AG04449 (cell line): ENCODE measurements at regions of chr17 and their contacts with region 1.

Region 1: DNA sequence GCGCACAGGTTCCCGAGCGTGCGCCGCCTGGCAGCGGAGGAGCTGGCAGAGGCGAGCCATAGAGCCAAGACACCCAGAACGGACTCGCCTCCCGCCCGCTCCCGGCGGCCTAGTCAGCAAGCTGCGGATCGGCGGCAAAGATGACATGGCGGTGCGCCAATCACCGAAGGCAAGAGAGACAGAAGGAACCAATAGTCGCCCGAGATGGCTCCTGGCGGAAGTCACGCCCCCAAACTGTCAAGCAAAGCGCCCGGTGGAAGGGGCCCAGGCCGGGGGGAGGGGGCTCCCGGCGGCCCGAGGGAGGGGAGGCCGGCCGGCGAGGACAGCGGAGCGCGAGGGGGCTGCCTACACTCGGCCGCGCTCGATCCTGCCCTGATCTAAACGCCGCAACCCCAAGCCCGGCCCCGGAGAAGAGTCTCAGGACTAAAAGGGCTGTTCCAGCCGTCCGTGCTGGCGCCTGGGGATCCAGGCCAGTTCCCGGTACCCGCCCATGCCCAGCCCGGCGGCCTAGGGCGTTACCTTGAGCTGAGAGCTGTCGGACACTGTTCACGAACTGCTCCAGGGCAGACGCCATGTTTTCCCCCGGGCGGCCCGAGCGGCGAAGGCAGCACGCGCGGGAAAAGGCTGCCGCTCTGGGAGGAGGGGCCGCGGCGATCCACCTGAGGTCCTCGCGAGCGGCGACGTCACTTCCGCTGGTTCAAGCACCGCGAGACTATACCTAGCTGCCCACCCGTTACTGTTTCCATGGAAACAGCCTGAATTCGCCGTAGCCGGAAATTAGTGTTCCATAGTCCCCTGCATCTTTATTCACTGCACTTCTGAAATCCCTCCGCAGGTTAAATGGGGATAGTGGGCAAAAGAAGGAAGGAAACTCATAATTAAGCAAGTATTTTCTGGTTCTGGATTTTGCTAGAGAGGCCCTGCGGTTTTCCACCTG is at the start of gene COPS3:
- DNase-seq: peak; percentile 80
- H3K4me3 ChIP-seq: peak within 1 kb of the TSS; percentile 85
- CTCF ChIP-seq: no peak

Region 2: DNA sequence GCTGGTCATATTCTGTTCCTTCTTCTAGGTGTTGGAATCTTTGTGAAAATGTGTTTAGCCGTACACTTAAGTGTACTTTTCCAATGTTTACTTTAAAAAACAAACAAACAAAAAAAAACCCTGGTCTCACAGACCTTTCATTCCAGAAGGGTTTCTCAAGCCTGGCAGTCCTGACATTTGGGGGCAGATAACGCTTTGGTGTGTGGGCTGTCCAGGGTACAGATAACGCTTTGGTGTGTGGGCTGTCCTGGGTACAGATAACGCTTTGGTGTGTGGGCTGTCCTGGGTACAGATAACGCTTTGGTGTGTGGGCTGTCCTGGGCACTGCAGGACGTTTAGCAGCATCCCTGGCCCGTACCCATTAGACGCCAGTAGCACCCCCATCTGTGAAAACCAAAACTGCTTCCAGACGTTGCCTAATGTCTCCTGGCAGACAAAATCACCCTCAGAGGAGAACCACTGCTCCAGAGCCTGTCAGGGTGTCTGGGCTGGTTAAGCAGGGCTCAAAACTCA is 28.7 kb before region 1 on chr17:
- CTCF ChIA-PET with region 1: no interaction called
- POLR2A ChIA-PET with region 1: no interaction called
- DNase-seq: no peak
- H3K4me3 ChIP-seq: no peak overlapping the region
- CTCF ChIP-seq: no peak

Region 3: DNA sequence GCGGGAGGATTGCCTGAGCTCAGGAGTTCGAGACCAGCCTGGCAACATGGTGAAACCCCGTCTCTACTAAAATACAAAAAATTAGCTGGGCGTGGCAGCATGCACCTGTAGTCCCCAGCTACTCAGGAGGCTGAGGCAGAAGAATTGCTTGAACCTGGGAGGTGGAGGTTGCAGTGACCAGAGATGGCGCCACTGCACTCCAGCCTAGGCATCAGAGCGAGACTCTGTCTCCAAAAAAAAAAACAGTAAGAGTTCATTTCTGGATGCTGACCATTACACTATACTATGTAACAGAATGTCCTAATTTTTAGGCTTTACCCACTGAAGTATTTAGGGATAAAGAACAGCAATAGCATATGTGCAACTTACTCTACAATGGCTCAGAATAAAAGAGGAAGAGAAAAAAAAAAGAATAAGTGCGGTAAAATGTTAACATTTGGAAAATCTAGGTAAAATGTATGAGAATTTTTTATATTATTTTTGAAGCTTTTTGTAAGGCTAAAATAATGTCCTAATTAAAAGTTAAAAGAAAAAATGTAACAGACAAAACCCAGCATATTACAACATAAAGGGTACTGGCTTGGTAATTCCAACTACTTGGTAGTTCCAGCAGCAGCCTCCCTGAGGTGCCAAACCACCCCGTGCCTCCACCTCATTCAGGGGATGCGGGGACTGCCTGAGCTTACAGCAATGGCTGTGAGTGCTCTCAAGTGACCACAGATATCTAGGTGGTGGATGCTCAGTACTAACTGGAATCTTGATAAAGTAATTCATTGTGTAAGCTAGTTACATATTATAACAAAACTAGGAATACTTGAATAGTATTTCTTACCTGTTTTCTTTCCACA is 10.7 kb before region 1 on chr17:
- CTCF ChIA-PET with region 1: interaction called, 10 read pairs
- POLR2A ChIA-PET with region 1: no interaction called
- DNase-seq: no peak
- H3K4me3 ChIP-seq: no peak overlapping the region
- CTCF ChIP-seq: peak; percentile 5